Activated CD4-positive, alpha-beta memory T cell treated with anti-CD3 and anti-CD28 coated beads for 36 hours (primary cell): ENCODE measurements at regions of chr13 and their contacts with region 1.

Region 1: DNA sequence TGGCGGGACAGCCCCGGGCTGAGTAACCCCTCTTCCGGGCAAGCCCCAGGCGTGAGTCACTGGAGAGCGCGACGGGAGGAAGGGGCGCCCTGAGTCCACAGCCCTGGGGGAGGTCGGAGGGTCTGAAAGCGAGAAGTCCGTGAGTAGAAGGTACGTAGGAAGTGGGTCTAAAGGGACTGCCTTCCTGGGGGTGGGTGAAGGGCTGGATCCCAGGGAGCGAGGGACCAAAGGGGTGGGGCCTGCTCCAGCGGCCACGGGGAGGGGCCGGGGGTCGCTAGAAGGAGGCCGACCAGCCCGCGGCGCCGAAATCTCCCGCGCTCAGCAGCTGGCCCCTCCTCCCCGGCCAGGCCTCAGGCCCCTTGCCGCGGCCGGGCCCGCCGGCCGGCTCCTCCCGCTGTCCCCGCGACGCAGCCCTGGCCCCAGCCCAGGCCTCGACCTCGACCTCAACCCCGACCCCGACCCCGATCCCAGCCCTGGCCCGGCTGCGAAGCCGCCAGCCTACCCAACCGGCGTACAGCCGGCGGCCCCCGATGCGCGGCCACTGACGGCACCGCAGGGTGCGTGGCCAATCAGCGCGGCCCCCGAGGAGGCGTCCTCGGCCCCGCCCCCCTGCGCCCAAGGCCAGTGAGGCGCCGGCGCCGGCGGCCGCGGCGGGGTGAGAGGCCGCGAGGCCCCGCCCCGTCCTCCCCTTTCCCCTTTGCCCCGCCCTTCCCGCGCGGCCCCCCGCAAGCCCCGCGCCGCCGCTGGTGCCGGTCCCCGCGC is 22.6 kb downstream of the IPO5 start:
- DNase-seq: peak; percentile 91
- H3K4me3 Mint-ChIP-seq: peak overlapping the region; percentile 86
- H3K27ac Mint-ChIP-seq: peak overlapping the region; percentile 95
- H3K4me1 Mint-ChIP-seq: peaks cover 31% of the 10 kb centered on the region
- H3K27me3 Mint-ChIP-seq: no peaks in the 10 kb centered on the region

Region 2: GRCh38 chr13:97257800-97258799 is 717.9 kb before region 1 on chr13:
- CTCF ChIA-PET with region 1: no interaction called
- POLR2A ChIA-PET with region 1: no interaction called
- intact Hi-C with region 1: loop called (anchors 5 kb)
- DNase-seq: peak; percentile 45
- H3K4me3 Mint-ChIP-seq: peak overlapping the region; percentile 40
- H3K27ac Mint-ChIP-seq: peak overlapping the region; percentile 76
- H3K4me1 Mint-ChIP-seq: peaks cover 80% of the 10 kb centered on the region
- H3K27me3 Mint-ChIP-seq: no peaks in the 10 kb centered on the region

Region 3: GRCh38 chr13:97855570-97856303 is 120.3 kb before region 1 on chr13:
- CTCF ChIA-PET with region 1: no interaction called
- POLR2A ChIA-PET with region 1: no interaction called
- intact Hi-C with region 1: loop called (anchors 10 kb)
- DNase-seq: peak; percentile 22
- H3K4me3 Mint-ChIP-seq: no peak overlapping the region
- H3K27ac Mint-ChIP-seq: no peak overlapping the region
- H3K4me1 Mint-ChIP-seq: no peaks in the 10 kb centered on the region
- H3K27me3 Mint-ChIP-seq: peaks cover 3% of the 10 kb centered on the region

Region 4: DNA sequence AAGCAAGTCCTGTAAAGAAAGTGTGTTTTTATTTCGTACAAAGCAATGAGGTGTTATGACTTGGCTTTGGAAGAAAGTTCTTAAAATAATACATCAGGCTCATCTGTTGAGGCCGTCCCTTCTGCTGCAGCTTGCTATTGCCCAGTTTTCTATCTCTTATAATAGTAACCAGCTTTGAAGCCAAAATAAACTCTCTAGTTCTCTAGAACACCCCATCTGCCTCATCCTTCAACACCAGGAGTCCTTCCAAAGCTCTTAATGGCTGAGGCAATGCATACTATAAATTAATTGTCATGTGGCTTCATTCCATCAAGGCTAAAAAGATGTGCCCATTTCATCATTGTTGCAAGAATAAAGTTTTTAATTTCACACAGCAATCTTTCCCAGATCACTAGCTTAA is 72.0 kb before region 1 on chr13:
- CTCF ChIA-PET with region 1: no interaction called
- POLR2A ChIA-PET with region 1: no interaction called
- intact Hi-C with region 1: no loop called
- DNase-seq: no peak
- H3K4me3 Mint-ChIP-seq: no peak overlapping the region
- H3K27ac Mint-ChIP-seq: no peak overlapping the region
- H3K4me1 Mint-ChIP-seq: no peaks in the 10 kb centered on the region
- H3K27me3 Mint-ChIP-seq: peaks cover 7% of the 10 kb centered on the region

Region 5: GRCh38 chr13:97999653-98000052 is 23.6 kb after region 1 on chr13:
- CTCF ChIA-PET with region 1: no interaction called
- POLR2A ChIA-PET with region 1: no interaction called
- intact Hi-C with region 1: loop called (anchors 2 kb)
- DNase-seq: no peak
- H3K4me3 Mint-ChIP-seq: no peak overlapping the region
- H3K27ac Mint-ChIP-seq: no peak overlapping the region
- H3K4me1 Mint-ChIP-seq: peaks cover 2% of the 10 kb centered on the region
- H3K27me3 Mint-ChIP-seq: no peaks in the 10 kb centered on the region

Region 6: GRCh38 chr13:98105929-98106336 is 129.9 kb after region 1 on chr13:
- CTCF ChIA-PET with region 1: no interaction called
- POLR2A ChIA-PET with region 1: no interaction called
- intact Hi-C with region 1: no loop called
- DNase-seq: no peak
- H3K4me3 Mint-ChIP-seq: no peak overlapping the region
- H3K27ac Mint-ChIP-seq: no peak overlapping the region
- H3K4me1 Mint-ChIP-seq: no peaks in the 10 kb centered on the region
- H3K27me3 Mint-ChIP-seq: no peaks in the 10 kb centered on the region

Region 7: DNA sequence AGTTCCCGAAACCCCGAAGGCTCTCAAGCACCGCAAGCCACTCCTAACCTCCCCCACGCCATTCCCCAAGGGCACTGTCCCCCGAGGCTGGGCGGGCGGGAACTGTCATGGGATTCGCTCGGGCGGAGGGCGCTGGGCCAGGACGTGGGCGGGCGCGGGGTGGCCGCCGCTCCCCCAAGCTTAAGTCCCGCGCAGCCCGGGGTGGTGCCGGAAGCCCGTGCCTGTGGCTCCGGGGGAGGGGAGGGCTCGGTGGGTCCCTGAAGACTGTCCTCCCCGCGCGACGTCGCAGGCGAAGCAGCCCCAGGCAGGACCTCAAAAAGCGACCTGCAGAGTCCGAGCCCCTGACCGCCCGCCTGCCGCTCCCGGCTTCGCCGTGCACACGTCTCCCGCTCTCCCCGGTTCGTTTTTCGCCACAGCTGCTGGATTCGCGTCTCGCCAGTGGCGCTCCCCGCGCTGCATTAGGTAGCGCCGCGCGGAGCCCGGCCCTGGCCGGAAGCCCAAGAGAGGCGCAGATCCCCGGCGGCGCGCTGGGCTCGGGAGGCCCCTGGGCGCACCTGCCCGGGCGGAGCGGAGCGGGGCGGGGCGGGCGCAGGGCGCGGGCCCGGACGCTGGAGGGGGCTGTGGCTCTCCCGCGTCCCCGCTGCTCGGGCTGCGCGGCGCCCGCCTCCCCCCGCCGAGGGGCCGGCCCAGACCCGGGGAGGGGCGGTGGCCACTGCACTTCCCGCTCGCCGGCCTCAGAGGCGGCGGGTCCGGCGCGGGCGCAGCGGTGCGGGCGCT is 166.5 kb after region 1 on chr13 and contains the start of gene FARP1:
- CTCF ChIA-PET with region 1: no interaction called
- POLR2A ChIA-PET with region 1: no interaction called
- intact Hi-C with region 1: loop called (anchors 5 kb)
- DNase-seq: peak; percentile 62
- H3K4me3 Mint-ChIP-seq: peak within 1 kb of the TSS; percentile 61
- H3K27ac Mint-ChIP-seq: no peak within 1 kb of the TSS
- H3K4me1 Mint-ChIP-seq: peaks cover 5% of the 10 kb centered on the region
- H3K27me3 Mint-ChIP-seq: peaks cover 51% of the 10 kb centered on the region
- total RNA-seq, gene FARP1: 0.56 to 0.64 TPM

Region 8: DNA sequence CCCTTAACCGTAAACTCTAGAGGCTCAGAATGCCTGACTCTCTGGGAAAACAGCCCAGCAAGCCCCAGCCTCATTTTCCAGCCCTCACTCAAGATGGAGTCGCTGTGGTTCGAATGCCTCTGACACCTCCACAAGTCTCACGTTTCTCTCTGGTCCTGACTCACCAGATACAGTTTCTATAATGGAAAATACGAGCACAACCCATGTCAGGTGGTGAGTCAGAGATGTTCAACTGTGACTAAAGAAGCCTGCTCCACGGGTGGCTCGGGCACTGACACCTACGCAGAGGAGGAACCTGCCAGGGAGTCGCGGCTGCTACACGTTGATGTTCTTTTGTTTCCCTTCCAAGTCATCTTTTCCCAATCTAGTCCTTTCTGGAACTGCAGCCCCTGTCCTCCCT is 688.0 kb after region 1 on chr13:
- CTCF ChIA-PET with region 1: no interaction called
- POLR2A ChIA-PET with region 1: no interaction called
- intact Hi-C with region 1: loop called (anchors 1 kb)
- DNase-seq: peak; percentile 87
- H3K4me3 Mint-ChIP-seq: no peak overlapping the region
- H3K27ac Mint-ChIP-seq: peak overlapping the region; percentile 56
- H3K4me1 Mint-ChIP-seq: peaks cover 16% of the 10 kb centered on the region
- H3K27me3 Mint-ChIP-seq: peaks cover 9% of the 10 kb centered on the region